ENCODE measurements at regions of chr18 and their contacts with region 1.

Region 1: GRCh38 chr18:49250816-49251388 is 209.5 kb downstream of the DYM start:
- DNase-seq: no peak
- H3K4me3 Mint-ChIP-seq: no peak overlapping the region
- H3K27ac Mint-ChIP-seq: no peak overlapping the region
- H3K4me1 Mint-ChIP-seq: no peaks in the 10 kb centered on the region
- H3K27me3 Mint-ChIP-seq: no peaks in the 10 kb centered on the region

Region 2: DNA sequence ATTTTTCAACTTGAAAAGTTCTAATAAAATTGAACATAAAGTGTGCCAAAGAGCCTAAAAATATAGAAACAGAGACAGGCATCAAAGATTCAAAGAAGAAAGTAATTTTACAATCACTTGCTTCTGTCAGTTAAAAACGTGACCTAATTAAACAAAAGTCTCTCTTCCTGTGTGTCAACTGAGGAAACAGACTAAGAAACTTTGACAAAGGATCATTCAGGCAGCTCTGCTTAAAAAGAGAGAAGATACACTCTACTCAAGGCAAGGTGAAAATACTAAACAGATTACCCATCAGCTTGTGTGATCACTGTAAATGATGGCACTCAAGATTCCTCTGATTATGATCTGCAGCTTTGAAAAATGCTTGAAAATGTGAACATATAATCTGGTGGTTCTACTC is 161.8 kb after region 1 on chr18:
- intact Hi-C with region 1: loop called (anchors 10 kb)
- DNase-seq: no peak
- H3K4me3 Mint-ChIP-seq: no peak overlapping the region
- H3K27ac Mint-ChIP-seq: peak overlapping the region; percentile 9
- H3K4me1 Mint-ChIP-seq: peaks cover 24% of the 10 kb centered on the region
- H3K27me3 Mint-ChIP-seq: no peaks in the 10 kb centered on the region